ENCODE measurements at regions of chr16 and their contacts with region 1.

Region 1: DNA sequence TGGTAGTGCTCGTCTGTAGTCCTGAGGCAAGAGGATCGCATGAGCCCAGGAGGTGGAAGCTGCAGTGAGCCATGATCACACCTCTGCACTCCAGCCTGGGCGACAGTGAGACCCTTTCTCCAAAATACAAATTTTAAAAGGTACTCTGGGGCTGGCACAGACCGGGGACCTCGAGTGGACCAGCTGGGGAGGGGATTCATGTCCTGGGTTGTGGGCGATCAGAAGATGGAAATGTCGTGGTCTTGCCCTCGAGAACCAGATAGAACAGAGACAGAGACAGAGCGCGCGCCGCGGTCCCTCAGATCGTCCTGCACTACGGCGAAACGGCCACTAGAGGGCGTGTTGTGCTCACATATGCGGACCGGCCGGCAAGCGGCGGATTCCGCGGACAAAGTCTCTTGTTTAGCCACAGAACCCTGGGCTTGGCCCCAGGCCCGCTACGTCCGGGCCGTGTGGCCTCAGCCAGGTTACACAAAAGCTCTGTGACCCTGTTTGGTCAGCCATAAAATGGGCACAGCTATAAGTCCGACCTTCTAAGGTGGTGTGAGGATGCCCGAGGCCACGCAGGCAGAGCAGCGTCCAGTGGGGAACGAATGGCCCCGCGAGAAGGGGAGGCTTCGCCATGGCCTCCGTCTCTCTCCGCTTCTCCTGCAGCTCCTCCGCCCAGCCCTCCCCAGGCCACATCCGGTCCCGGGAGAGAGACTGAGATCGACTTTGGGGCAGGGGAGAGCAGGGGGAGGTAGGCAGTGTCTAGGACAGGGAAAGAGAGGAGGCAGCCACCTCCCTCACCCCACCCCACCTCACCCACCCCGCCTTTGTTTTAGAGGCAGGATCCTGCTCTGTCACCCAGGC is 14.6 kb upstream of the SBK1 start:
- DNase-seq: peak; percentile 65
- ATAC-seq: peak; percentile 90
- H3K4me3 ChIP-seq: peak overlapping the region; percentile 51 to 64
- H3K27ac ChIP-seq: peak overlapping the region; percentile 36; the same call in 1 of the 2 replicates
- H3K4me1 ChIP-seq: peaks cover 2 to 9% of the 10 kb centered on the region in 2 experiments; a peak in 3 of 4 replicates
- H3K27me3 ChIP-seq: 0 out of 2 replicates have a peak, but pooled peaks cover 3% of the 10 kb centered on the region
- CTCF ChIP-seq: peak; percentile 85 to 95 (median 90); a peak in 5 of 6 replicates
- POLR2A ChIP-seq: peak; percentile 52
- RAD21 ChIP-seq: peak; percentile 99

Region 2: GRCh38 chr16:28140788-28141618 is 136.8 kb before region 1 on chr16:
- CTCF ChIA-PET with region 1: no interaction called
- POLR2A ChIA-PET with region 1: no interaction called
- RAD21 ChIA-PET with region 1: no interaction called
- intact Hi-C with region 1: no loop called
- DNase-seq: no peak
- ATAC-seq: no peak
- H3K4me3 ChIP-seq: no peak overlapping the region
- H3K27ac ChIP-seq: no peak overlapping the region
- H3K4me1 ChIP-seq: no peaks in the 10 kb centered on the region
- H3K27me3 ChIP-seq: no peaks in the 10 kb centered on the region
- CTCF ChIP-seq: no peak
- POLR2A ChIP-seq: no peak
- RAD21 ChIP-seq: no peak

Region 3: GRCh38 chr16:28211712-28212534 is 65.8 kb before region 1 on chr16 and contains the start of gene XPO6:
- CTCF ChIA-PET with region 1: no interaction called
- POLR2A ChIA-PET with region 1: no interaction called
- RAD21 ChIA-PET with region 1: no interaction called
- intact Hi-C with region 1: loop called (anchors 10 kb)
- DNase-seq: peak; percentile 80
- ATAC-seq: peak; percentile 89
- H3K4me3 ChIP-seq: peak within 1 kb of the TSS; percentile 89 to 90
- H3K27ac ChIP-seq: peak within 1 kb of the TSS; percentile 86
- H3K4me1 ChIP-seq: peaks cover 17 to 24% of the 10 kb centered on the region in 2 experiments
- H3K27me3 ChIP-seq: no peaks in the 10 kb centered on the region
- CTCF ChIP-seq: no peak
- POLR2A ChIP-seq: no peak
- RAD21 ChIP-seq: no peak
- total RNA-seq, gene XPO6: 162 TPM

Region 4: GRCh38 chr16:28304214-28304613 is 26.5 kb after region 1 on chr16:
- CTCF ChIA-PET with region 1: no interaction called
- POLR2A ChIA-PET with region 1: no interaction called
- RAD21 ChIA-PET with region 1: no interaction called
- intact Hi-C with region 1: no loop called
- DNase-seq: no peak
- ATAC-seq: no peak
- H3K4me3 ChIP-seq: no peak overlapping the region
- H3K27ac ChIP-seq: no peak overlapping the region
- H3K4me1 ChIP-seq: no peaks in the 10 kb centered on the region
- H3K27me3 ChIP-seq: no peaks in the 10 kb centered on the region
- CTCF ChIP-seq: no peak
- POLR2A ChIP-seq: no peak
- RAD21 ChIP-seq: no peak

Region 5: GRCh38 chr16:28317040-28317880 is 39.5 kb after region 1 on chr16:
- CTCF ChIA-PET with region 1: interaction called, 10 read pairs
- POLR2A ChIA-PET with region 1: no interaction called
- RAD21 ChIA-PET with region 1: interaction called in 1 of 2 experiments, 3 read pairs
- intact Hi-C with region 1: loop called (anchors 1 kb)
- DNase-seq: peak; percentile 21
- ATAC-seq: peak; percentile 76
- H3K4me3 ChIP-seq: no peak overlapping the region
- H3K27ac ChIP-seq: no peak overlapping the region
- H3K4me1 ChIP-seq: peaks cover 4 to 10% of the 10 kb centered on the region in 2 experiments; a peak in 2 of 4 replicates
- H3K27me3 ChIP-seq: no peaks in the 10 kb centered on the region
- CTCF ChIP-seq: peak; percentile 66 to 94 (median 90)
- POLR2A ChIP-seq: no peak
- RAD21 ChIP-seq: peak; percentile 81

Region 6: DNA sequence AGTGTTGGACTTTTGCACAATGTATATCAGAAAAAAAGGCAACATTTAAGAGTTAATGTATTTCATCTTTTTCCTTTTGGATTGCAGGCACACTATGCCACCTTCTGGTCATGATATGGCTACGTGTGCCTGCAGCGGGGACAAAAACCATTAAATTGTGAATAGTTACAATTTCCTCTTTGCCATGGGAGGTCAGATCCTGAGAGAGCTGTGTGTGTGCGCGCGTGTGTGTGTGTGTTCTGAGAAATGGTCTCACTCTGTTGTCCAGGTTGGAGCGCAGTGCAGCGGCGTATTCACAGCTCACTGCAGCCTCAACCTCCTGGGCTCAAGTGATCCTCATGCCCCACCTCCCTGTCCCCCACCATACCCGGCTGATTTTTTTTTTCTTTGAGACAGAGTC is 271.6 kb after region 1 on chr16:
- CTCF ChIA-PET with region 1: no interaction called
- POLR2A ChIA-PET with region 1: no interaction called
- RAD21 ChIA-PET with region 1: no interaction called
- intact Hi-C with region 1: loop called (anchors 1 kb)
- DNase-seq: peak; percentile 33
- ATAC-seq: peak; percentile 33
- H3K4me3 ChIP-seq: no peak overlapping the region
- H3K27ac ChIP-seq: no peak overlapping the region
- H3K4me1 ChIP-seq: peaks cover 0 to 14% of the 10 kb centered on the region in 2 experiments; a peak in 2 of 4 replicates
- H3K27me3 ChIP-seq: no peaks in the 10 kb centered on the region
- CTCF ChIP-seq: peak; percentile 50 to 91 (median 62)
- POLR2A ChIP-seq: no peak
- RAD21 ChIP-seq: peak; percentile 90

Region 7: DNA sequence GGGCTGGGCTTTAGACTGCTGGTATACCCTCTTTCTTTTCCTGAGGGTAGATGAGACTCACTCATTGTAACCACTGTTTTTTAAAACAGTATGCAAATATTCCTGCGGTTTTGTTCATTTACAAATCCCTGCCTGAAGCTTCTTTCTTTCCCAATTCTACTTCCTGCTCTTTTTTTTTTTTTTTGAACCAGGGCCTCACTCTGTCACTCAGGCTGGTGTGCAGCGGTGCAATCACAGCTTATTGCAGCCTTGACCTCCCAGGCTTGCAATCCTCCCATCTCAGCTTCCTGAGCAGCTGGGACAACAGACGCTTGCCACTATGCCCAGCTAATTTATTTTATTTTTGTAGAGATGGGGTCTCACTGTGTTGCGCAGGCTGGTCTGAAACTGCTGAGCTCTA is 340.1 kb after region 1 on chr16:
- CTCF ChIA-PET with region 1: no interaction called
- POLR2A ChIA-PET with region 1: no interaction called
- RAD21 ChIA-PET with region 1: interaction called in 1 of 2 experiments, 4 read pairs
- intact Hi-C with region 1: loop called (anchors 5 kb)
- DNase-seq: no peak
- ATAC-seq: no peak
- H3K4me3 ChIP-seq: no peak overlapping the region
- H3K27ac ChIP-seq: no peak overlapping the region
- H3K4me1 ChIP-seq: no peaks in the 10 kb centered on the region
- H3K27me3 ChIP-seq: no peaks in the 10 kb centered on the region
- CTCF ChIP-seq: no peak
- POLR2A ChIP-seq: no peak
- RAD21 ChIP-seq: no peak

Region 8: DNA sequence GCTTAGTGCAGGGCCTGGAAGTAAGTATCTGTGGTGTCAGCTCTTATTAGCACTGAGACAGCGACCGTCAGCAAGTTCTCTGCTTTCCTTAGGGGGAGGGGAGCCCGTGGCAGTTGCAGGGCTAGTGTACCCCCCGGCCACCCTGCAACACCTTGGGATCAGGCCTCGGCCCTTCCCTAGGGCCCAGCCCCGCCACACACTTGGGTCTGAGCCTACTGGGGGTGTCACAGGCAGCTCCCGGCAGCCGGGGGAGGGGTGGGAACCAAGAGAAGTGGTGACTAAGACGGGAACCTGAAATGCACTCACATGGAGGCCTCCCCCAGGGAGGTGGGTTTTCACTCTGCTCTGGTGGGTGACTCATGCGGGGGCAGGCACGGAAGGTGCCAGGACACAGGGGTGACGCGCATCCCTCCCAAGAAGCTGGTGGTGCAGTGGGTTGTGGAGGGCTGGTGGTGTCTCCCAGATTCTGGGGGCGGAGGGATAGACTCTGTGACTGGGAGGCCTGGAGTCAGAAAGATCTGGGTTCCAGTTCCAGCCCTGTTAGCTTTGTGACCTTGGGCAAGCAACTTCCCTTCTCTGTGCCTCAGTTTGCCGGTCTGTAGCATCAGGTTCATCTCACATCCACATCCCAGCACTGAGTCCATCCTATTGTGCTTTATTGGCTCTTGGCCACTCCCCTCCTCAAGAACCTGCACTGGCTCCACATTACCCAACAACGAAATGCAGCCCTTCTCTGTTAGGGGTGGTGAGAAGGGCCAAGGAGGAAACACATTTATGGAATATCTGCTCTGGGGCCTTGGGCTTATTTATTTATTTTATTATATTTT is 751.6 kb after region 1 on chr16:
- CTCF ChIA-PET with region 1: no interaction called
- POLR2A ChIA-PET with region 1: no interaction called
- RAD21 ChIA-PET with region 1: no interaction called
- intact Hi-C with region 1: no loop called
- DNase-seq: no peak
- ATAC-seq: peak; percentile 58; the same call in 1 of the 2 replicates
- H3K4me3 ChIP-seq: no peak overlapping the region
- H3K27ac ChIP-seq: no peak overlapping the region
- H3K4me1 ChIP-seq: peaks cover 2 to 9% of the 10 kb centered on the region in 2 experiments; a peak in 2 of 4 replicates
- H3K27me3 ChIP-seq: no peaks in the 10 kb centered on the region
- CTCF ChIP-seq: no peak
- POLR2A ChIP-seq: no peak
- RAD21 ChIP-seq: no peak

Measured in HCT116 (cell line).